Activated CD8-positive, alpha-beta memory T cell treated with anti-CD3 and anti-CD28 coated beads, Interleukin-2, amount 10 ng/mL, durations not matched to agents 7 days and 5 days (primary cell): ENCODE measurements at regions of chr6 and their contacts with region 1.

Region 1: GRCh38 chr6:85923013-85923430 is 280.3 kb upstream of the SYNCRIP start:
- DNase-seq: no peak
- ATAC-seq: no peak
- H3K4me3 Mint-ChIP-seq: no peak overlapping the region
- H3K27ac Mint-ChIP-seq: no peak overlapping the region
- H3K4me1 Mint-ChIP-seq: no peaks in the 10 kb centered on the region
- H3K27me3 Mint-ChIP-seq: no peaks in the 10 kb centered on the region

Region 2: DNA sequence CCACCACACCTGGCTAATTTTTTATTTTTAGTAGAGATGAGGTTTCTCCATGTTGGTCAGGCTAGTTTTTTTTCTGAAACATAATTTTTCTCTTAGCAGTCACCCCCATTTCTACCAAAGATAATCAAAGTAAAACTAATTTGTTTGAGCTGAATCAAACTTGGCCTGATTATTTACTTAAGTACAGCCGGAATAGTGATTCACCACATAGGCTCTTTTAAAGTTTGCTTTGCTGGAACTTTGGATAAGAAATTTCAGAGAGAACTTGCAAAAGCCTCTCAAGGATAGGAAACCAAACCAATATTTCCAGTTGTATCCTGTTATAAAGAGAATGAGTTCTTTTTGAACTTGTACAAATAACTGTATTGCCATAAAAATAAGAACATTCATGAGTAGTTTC is 175.4 kb before region 1 on chr6:
- CTCF ChIA-PET with region 1: no interaction called
- DNase-seq: no peak
- ATAC-seq: no peak
- H3K4me3 Mint-ChIP-seq: no peak overlapping the region
- H3K27ac Mint-ChIP-seq: no peak overlapping the region
- H3K4me1 Mint-ChIP-seq: no peaks in the 10 kb centered on the region
- H3K27me3 Mint-ChIP-seq: peaks cover 11% of the 10 kb centered on the region

Region 3: DNA sequence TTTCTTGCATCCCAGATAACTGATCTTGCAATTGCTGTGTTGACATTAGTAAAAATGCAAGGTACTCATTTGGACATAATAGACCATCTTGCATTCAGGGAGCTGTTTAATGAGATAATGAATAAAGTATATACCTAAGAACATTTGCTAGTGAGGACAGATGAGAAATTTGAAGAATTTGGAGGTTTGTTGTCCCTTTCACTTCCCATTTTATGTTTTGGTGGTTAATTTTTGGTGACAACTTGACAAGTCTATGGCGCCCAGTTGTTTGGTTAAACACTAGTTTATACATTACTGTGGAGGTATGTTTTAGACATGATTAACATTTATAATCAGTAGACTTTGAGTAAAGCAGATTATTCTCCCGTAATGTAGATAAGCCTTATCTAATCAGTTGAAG is 19.8 kb after region 1 on chr6:
- CTCF ChIA-PET with region 1: no interaction called
- DNase-seq: no peak
- ATAC-seq: no peak
- H3K4me3 Mint-ChIP-seq: no peak overlapping the region
- H3K27ac Mint-ChIP-seq: no peak overlapping the region
- H3K4me1 Mint-ChIP-seq: no peaks in the 10 kb centered on the region
- H3K27me3 Mint-ChIP-seq: no peaks in the 10 kb centered on the region

Region 4: GRCh38 chr6:86856937-86857563 is 934.0 kb after region 1 on chr6:
- CTCF ChIA-PET with region 1: interaction called, 11 read pairs
- DNase-seq: peak; percentile 46
- ATAC-seq: no peak
- H3K4me3 Mint-ChIP-seq: no peak overlapping the region
- H3K27ac Mint-ChIP-seq: no peak overlapping the region
- H3K4me1 Mint-ChIP-seq: no peaks in the 10 kb centered on the region
- H3K27me3 Mint-ChIP-seq: no peaks in the 10 kb centered on the region